ENCODE measurements at regions of chr4 and their contacts with region 1.

Region 1: DNA sequence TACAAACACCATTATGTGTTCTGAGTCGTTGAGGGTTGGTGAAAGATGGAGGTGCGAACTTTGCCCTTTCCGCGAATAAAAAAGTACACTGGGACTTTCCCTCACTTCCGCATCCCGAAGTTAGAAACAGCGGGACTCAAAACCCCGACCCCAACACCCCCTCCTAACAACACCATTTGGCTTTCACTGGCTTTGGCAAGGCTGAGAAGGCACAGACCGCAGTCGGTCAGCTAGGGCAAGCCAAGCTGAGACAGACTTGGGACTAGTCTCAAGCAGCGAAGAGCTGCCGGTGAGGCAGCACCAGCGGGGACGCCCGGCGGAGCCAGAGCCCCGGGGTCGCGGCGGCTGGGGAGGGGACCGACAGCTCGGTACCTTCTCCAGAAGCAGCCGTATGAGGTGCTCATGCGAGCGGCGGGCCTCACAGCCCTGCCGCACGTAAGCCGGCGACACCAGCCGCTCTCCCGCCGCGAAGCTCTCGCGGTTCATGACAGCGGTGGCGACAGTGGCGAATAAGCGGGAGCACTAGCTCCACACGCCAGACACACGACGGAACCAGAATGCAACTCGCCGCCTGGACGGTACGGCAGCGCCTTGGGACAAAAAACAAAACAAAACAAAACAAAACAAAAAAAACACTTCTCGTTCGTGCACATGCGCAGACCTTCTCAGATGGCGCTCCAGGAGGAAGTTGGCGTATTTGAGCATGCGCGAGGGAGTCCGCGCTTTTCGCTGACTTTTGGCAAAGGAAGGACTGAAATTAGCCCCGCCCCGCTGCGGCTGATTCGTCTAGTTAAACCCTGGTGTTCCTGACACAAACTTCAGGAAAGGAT is at the start of gene SEPSECS:
- H3K4me3 Mint-ChIP-seq: peak within 1 kb of the TSS; percentile 77
- H3K27ac Mint-ChIP-seq: peak within 1 kb of the TSS; percentile 98
- H3K4me1 Mint-ChIP-seq: peaks cover 35% of the 10 kb centered on the region
- H3K27me3 Mint-ChIP-seq: no peaks in the 10 kb centered on the region

Region 2: DNA sequence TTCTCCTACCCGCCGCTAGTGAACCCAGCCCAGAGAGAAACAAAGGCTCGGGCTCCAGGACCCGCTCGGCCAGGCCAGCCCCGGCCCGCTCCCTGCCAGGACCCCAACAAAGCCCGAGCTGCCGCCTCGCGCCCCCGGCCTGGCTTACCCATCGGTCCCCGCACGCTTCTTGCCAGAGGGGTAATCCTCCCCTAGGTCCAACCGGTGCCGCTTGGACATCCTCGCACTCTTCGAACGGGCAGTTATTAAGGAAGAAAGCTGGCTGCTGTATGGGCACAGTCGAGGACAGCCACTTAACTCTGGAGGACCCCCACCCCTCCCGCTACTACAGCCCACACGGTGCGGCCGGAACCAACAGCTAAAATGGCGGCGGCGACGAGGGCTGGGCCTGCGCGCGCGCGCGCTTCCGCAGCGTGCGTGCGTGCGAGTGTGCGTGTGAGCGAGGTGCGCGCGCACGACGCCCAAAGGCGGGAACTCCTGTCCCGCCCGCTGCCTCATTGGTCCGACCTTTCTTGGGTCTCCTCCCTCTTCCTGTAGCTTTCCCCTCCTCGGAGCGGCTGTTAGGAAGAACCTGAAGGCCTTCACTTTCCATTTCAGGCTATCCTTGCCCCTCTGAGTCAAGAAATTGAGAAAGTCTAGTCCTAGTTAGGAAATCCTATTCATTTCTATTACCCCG is 575.8 kb before region 1 on chr4 and contains the start of gene DHX15:
- intact Hi-C with region 1: loop called (anchors 10 kb)
- H3K4me3 Mint-ChIP-seq: peak within 1 kb of the TSS; percentile 100
- H3K27ac Mint-ChIP-seq: peak within 1 kb of the TSS; percentile 95
- H3K4me1 Mint-ChIP-seq: peaks cover 30% of the 10 kb centered on the region
- H3K27me3 Mint-ChIP-seq: no peaks in the 10 kb centered on the region

Region 3: GRCh38 chr4:25144870-25145481 is 15.1 kb before region 1 on chr4:
- intact Hi-C with region 1: no loop called
- H3K4me3 Mint-ChIP-seq: no peak overlapping the region
- H3K27ac Mint-ChIP-seq: no peak overlapping the region
- H3K4me1 Mint-ChIP-seq: peaks cover 16% of the 10 kb centered on the region
- H3K27me3 Mint-ChIP-seq: no peaks in the 10 kb centered on the region

Region 4: DNA sequence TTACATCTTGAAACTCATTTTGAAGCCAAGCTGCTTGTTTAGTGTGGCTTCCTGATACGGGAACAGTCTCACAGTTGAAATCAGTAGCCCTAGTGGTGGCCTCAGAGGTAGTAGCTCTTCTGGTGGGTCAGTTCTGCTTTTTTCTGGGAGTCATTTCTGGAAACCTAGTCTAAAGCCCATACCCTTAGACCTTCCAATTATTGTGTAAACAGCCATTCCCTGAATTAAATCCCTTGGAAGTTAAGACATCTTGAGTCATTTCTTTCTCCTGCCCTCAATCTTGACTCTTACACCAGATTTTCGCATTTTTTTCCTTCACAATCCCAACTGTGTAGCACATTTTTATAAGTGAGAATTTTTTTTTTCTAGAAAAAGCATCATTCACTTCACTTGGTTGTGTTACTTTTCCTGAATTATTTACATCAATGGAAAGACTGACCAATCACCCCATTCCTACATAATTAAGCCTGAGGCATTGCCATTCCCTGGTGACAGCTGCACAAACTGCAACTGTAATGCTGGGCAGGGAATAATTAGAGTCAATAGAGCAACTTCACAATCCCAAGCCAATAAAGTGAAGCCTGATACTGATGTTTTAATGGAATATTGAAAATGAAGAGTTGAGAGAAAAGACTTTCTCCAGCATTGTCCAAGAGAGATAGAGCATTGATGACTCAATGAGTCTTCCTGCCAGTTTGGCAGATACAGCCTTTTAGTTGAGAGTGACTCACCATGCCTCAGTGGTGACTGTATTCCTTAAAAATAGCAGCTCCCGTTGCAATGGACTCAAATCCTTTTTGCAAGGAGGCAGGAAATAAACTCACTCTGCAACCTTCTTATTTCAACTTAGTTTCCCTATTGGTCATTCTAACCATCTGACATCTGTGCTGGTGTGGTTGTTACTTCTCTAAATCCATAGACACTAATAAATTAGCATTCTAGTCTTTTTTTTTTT is 13.1 kb after region 1 on chr4:
- intact Hi-C with region 1: loop called (anchors 1 kb)
- H3K4me3 Mint-ChIP-seq: no peak overlapping the region
- H3K27ac Mint-ChIP-seq: peak overlapping the region; percentile 86
- H3K4me1 Mint-ChIP-seq: peaks cover 21% of the 10 kb centered on the region
- H3K27me3 Mint-ChIP-seq: no peaks in the 10 kb centered on the region

Region 5: GRCh38 chr4:25234390-25235370 is 74.6 kb after region 1 on chr4:
- intact Hi-C with region 1: loop called (anchors 2 kb)
- H3K4me3 Mint-ChIP-seq: peak overlapping the region; percentile 94
- H3K27ac Mint-ChIP-seq: peak overlapping the region; percentile 90
- H3K4me1 Mint-ChIP-seq: peaks cover 17% of the 10 kb centered on the region
- H3K27me3 Mint-ChIP-seq: no peaks in the 10 kb centered on the region

Region 6: DNA sequence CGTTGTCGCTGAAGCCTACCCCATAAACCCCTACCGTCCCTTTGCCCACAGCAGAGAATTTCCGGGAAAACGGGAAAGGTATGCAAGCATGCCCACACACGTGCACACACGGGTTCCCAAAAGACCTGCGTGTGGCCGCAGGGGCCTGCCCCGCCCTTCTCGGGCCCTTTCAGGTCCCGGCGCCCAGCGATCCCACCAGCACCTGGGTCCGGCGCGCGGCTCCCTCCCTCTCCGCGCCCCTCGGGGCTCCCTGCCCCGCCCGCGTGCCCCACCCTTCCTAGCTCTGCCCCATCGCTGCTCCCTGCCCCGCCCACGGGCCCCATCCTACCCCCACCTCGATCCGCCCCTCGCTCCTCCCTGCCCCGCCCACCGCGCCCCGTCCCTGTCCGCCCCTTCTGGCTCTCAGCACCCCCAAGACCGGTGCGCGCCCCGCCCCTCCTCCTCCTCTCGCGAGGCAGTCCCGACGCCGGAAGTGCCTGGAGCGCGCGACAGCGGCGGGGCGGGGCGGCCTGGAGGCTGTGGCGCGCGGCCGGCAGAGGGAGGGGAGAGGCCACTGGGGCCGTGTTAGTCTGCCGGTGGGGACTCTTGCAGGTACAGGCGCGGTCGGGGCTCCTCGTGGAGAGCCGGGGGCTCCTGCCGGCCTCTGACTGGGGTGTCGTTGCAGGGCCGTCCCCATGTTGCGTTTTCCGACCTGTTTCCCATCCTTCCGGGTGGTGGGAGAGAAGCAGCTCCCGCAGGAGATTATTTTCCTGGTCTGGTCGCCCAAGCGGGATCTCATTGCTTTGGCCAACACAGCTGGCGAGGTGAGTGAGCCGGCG is 216.9 kb after region 1 on chr4 and contains the start of gene ANAPC4:
- intact Hi-C with region 1: loop called (anchors 5 kb)
- H3K4me3 Mint-ChIP-seq: peak within 1 kb of the TSS; percentile 91
- H3K27ac Mint-ChIP-seq: peak within 1 kb of the TSS; percentile 85
- H3K4me1 Mint-ChIP-seq: no peaks in the 10 kb centered on the region
- H3K27me3 Mint-ChIP-seq: peaks cover 3% of the 10 kb centered on the region

Measured in dendritic cell treated with granulocyte-macrophage colony-stimulating factor and Interleukin-4, amounts not matched to agents 40 ng/mL and 50 ng/mL, for 4 days (primary cell).